Endothelial cell of umbilical vein (primary cell): ENCODE measurements at regions of chr3 and their contacts with region 1.

Region 1: GRCh38 chr3:189947948-189948723 is 172.6 kb downstream of the P3H2 start:
- DNase-seq: peak; percentile 59
- H3K4me3 ChIP-seq: no peak overlapping the region
- H3K27ac ChIP-seq: no peak overlapping the region
- H3K4me1 ChIP-seq: no peaks in the 10 kb centered on the region
- H3K27me3 ChIP-seq: peaks cover 2 to 4% of the 10 kb centered on the region in 2 experiments
- CTCF ChIP-seq: peak; percentile 37 to 39
- POLR2A ChIP-seq: no peak

Region 2: GRCh38 chr3:189148081-189148507 is 800.0 kb before region 1 on chr3:
- CTCF ChIA-PET with region 1: interaction called, 19 read pairs
- POLR2A ChIA-PET with region 1: no interaction called
- dilution Hi-C with region 1: no loop called
- intact Hi-C with region 1: no loop called
- DNase-seq: peak; percentile 71
- H3K4me3 ChIP-seq: no peak overlapping the region
- H3K27ac ChIP-seq: no peak overlapping the region
- H3K4me1 ChIP-seq: no peaks in the 10 kb centered on the region
- H3K27me3 ChIP-seq: peaks cover 5 to 8% of the 10 kb centered on the region in 2 experiments
- CTCF ChIP-seq: peak; percentile 61 to 70
- POLR2A ChIP-seq: no peak

Region 3: GRCh38 chr3:189646853-189647542 is 301.1 kb before region 1 on chr3:
- CTCF ChIA-PET with region 1: interaction called, 158 read pairs
- POLR2A ChIA-PET with region 1: no interaction called
- dilution Hi-C with region 1: no loop called
- intact Hi-C with region 1: no loop called
- DNase-seq: no peak
- H3K4me3 ChIP-seq: no peak overlapping the region
- H3K27ac ChIP-seq: no peak overlapping the region
- H3K4me1 ChIP-seq: no peaks in the 10 kb centered on the region
- H3K27me3 ChIP-seq: no peaks in the 10 kb centered on the region
- CTCF ChIP-seq: no peak
- POLR2A ChIP-seq: no peak

Region 4: DNA sequence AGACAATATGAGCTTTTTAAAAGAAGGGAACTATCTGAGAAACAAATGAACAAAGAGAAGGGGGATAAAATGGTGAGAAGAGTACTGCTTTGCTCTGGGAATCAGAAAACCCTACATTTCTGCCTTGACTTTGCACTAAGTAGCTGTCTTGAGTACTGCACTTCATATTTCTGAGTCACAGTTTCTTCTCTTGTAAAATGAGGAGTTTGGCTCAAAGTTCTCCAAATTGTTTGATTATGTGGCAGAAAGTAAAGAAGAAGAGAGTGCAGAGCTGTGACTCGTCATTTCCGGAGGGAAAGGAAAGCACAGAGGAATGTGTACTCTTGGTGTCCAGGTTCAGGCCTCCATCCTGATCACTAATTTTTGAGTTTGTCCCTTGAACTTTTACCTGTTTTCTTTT is 262.3 kb before region 1 on chr3:
- CTCF ChIA-PET with region 1: interaction called, 14 read pairs
- POLR2A ChIA-PET with region 1: no interaction called
- dilution Hi-C with region 1: no loop called
- intact Hi-C with region 1: no loop called
- DNase-seq: peak; percentile 78
- H3K4me3 ChIP-seq: no peak overlapping the region
- H3K27ac ChIP-seq: peak overlapping the region; percentile 96
- H3K4me1 ChIP-seq: peaks cover 15% of the 10 kb centered on the region
- H3K27me3 ChIP-seq: no peaks in the 10 kb centered on the region
- CTCF ChIP-seq: no peak
- POLR2A ChIP-seq: no peak

Region 5: DNA sequence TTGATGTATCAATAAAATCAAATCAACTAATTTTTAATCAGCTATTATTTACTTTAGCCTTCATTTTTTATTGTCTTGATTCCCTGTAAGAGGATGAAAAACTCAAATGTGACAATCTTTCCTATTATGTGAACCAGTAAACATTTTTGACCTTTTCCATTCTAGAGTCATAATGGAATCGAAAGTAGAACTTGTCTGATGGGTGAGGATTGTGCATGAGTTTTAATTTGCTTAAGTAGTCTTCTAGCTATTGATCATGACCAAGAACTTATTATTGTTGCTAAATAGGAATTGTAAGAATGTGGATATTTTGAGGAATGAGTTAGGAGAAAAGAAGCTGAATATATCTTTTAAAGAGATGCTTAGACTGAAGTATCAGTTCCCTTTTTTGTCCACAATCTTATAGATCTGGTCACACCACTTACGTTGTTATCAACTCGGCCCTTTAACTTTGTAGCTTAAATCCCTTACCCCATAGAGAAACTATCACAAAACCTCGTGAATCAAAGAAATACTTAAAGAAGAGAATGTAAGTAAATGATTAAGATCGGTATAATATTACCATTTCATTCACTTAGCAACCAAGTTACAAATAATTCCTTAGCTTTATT is 169.7 kb before region 1 on chr3:
- CTCF ChIA-PET with region 1: interaction called, 10 read pairs
- POLR2A ChIA-PET with region 1: no interaction called
- dilution Hi-C with region 1: no loop called
- intact Hi-C with region 1: no loop called
- DNase-seq: no peak
- H3K4me3 ChIP-seq: no peak overlapping the region
- H3K27ac ChIP-seq: no peak overlapping the region
- H3K4me1 ChIP-seq: peaks cover 4% of the 10 kb centered on the region
- H3K27me3 ChIP-seq: no peaks in the 10 kb centered on the region
- CTCF ChIP-seq: no peak
- POLR2A ChIP-seq: no peak

Region 6: GRCh38 chr3:189896533-189896932 is 51.6 kb before region 1 on chr3:
- CTCF ChIA-PET with region 1: no interaction called
- POLR2A ChIA-PET with region 1: no interaction called
- dilution Hi-C with region 1: no loop called
- intact Hi-C with region 1: no loop called
- DNase-seq: no peak
- H3K4me3 ChIP-seq: no peak overlapping the region
- H3K27ac ChIP-seq: no peak overlapping the region
- H3K4me1 ChIP-seq: no peaks in the 10 kb centered on the region
- H3K27me3 ChIP-seq: no peaks in the 10 kb centered on the region
- CTCF ChIP-seq: no peak
- POLR2A ChIP-seq: no peak

Region 7: GRCh38 chr3:189937307-189938124 is 10.6 kb before region 1 on chr3:
- CTCF ChIA-PET with region 1: interaction called, 44 read pairs
- POLR2A ChIA-PET with region 1: no interaction called
- dilution Hi-C with region 1: no loop called
- intact Hi-C with region 1: no loop called
- DNase-seq: peak; percentile 88
- H3K4me3 ChIP-seq: no peak overlapping the region
- H3K27ac ChIP-seq: peak overlapping the region; percentile 57
- H3K4me1 ChIP-seq: peaks cover 16% of the 10 kb centered on the region
- H3K27me3 ChIP-seq: no peaks in the 10 kb centered on the region
- CTCF ChIP-seq: no peak
- POLR2A ChIP-seq: no peak

Region 8: GRCh38 chr3:190983875-190984274 is 1035.7 kb after region 1 on chr3:
- CTCF ChIA-PET with region 1: no interaction called
- POLR2A ChIA-PET with region 1: no interaction called
- dilution Hi-C with region 1: no loop called
- intact Hi-C with region 1: no loop called
- DNase-seq: no peak
- H3K4me3 ChIP-seq: no peak overlapping the region
- H3K27ac ChIP-seq: no peak overlapping the region
- H3K4me1 ChIP-seq: no peaks in the 10 kb centered on the region
- H3K27me3 ChIP-seq: no peaks in the 10 kb centered on the region
- CTCF ChIP-seq: no peak
- POLR2A ChIP-seq: no peak